OCI-LY7 (cell line): ENCODE measurements at regions of chr4 and their contacts with region 1.

Region 1: DNA sequence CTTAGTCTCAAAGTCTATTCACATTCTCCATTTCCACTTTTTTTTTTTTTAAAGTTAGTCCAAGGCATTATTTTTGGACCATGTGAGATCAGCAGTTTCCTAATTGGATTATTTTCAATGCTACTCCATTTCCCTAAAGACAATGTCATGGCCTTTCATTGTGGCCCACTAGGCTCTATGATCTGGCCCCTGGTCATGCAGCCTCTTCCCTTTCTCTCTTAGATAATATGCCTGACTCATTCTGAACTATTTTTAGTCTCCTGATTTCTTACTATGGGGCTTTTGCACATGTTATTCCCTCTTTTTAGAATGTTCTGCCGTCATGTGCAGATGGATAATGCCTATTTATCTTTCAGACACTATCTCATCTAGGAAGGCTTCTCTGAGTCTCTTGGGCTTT is 157.3 kb downstream of the TMA16 start:
- DNase-seq: no peak
- H3K4me3 ChIP-seq: no peak overlapping the region
- H3K27ac ChIP-seq: no peak overlapping the region
- H3K4me1 ChIP-seq: no peaks in the 10 kb centered on the region
- CTCF ChIP-seq: no peak

Region 2: GRCh38 chr4:163638909-163639308 is 12.9 kb before region 1 on chr4:
- CTCF ChIA-PET with region 1: no interaction called
- POLR2A ChIA-PET with region 1: interaction called, 11 read pairs
- intact Hi-C with region 1: no loop called
- DNase-seq: no peak
- H3K4me3 ChIP-seq: no peak overlapping the region
- H3K27ac ChIP-seq: no peak overlapping the region
- H3K4me1 ChIP-seq: no peaks in the 10 kb centered on the region
- CTCF ChIP-seq: no peak